Common myeloid progenitor, CD34-positive (primary cell): ENCODE measurements at regions of chr2 and their contacts with region 1.

Region 1: GRCh38 chr2:11719230-11719977 is 27.0 kb upstream of the LPIN1 start:
- DNase-seq: peak; percentile 61 to 87 (median 77)
- H3K4me3 ChIP-seq: peak overlapping the region in 6 of 7 experiments; percentile 46 to 76 (median 60)
- H3K27ac ChIP-seq: peak overlapping the region; percentile 8 to 49
- H3K4me1 ChIP-seq: peaks cover 3 to 31% (median 20%) of the 10 kb centered on the region in 4 experiments
- H3K27me3 ChIP-seq: no peaks in the 10 kb centered on the region

Region 2: DNA sequence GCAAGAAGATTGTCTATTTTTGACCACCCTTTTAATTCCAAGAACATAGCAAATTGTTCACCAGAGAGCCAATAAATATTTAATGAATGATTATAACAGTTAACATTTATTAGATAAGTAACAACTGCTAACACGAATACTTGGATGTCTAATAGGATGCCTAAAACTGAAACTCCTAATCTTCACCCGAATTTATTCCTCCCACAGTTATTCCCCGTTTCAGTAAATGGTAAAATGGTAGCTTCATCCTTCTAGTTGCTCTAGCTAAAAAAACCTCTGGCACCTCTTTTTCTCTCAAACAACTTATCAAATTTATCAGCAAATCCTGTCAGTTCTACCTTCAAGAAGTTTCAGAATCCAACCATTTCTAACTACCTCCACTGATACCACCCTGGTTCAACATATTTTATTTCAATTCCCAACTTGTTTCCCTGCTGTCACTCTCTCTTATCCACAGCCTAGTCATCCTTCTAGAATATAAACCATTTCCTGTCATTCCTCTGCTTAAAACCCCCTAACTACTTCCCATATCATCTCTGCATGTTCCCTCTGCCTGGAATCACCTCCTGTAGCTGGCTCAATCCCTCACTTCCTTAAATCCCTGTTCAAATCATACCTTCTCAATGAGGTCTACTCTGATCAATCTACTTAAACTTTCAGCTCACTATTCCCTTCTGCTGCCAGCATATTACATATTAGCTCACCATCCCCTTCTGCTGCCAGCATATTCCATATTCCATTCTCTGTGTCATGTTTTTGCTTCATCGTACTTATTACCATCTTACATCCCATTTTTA is 468.8 kb before region 1 on chr2:
- CTCF ChIA-PET with region 1: no interaction called
- POLR2A ChIA-PET with region 1: no interaction called
- DNase-seq: no peak
- H3K4me3 ChIP-seq: no peak overlapping the region
- H3K27ac ChIP-seq: no peak overlapping the region
- H3K4me1 ChIP-seq: no peaks in the 10 kb centered on the region
- H3K27me3 ChIP-seq: no peaks in the 10 kb centered on the region

Region 3: DNA sequence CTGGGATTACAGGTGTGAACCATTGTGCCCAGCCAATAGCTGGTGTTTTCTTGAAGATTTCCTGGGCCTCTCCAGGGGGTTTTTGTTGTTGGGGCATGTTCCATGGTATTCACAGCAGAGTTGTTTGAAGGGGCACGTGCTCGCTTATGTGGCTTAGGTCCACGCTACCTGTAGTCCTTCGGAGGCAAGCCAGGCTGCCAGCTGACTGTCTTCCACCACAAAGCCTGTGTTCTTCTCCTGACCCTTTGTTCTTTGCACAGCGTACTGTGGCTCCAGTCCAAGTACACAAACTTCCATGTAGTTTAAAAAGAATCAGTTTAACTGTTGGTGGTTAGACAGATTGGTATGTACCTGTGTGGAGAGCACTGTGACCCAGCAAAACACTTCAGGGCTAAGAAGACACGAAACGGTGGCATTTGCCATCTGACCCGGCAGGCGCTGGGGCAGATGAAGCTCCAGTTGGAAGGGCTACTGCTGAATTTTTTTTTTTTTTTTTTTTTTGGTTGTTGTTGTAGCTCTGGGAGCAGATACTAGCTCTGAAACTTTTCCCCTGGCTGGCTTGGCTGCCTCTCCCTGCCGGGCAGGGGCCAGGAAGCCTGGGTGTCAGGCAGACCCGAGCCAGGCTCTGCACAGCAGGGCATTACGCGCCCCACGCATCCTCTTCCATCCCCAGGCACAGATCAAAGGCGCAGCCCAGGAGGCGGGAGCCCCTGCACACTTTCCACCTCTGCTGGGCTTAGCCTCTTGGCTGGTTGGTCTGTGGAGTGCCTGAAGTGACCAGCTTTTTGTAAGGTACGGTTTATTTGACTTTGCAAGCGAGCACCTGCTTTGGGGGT is 179.9 kb before region 1 on chr2:
- CTCF ChIA-PET with region 1: no interaction called
- POLR2A ChIA-PET with region 1: no interaction called
- DNase-seq: no peak
- H3K4me3 ChIP-seq: no peak overlapping the region
- H3K27ac ChIP-seq: no peak overlapping the region
- H3K4me1 ChIP-seq: no peaks in the 10 kb centered on the region
- H3K27me3 ChIP-seq: peaks cover 0 to 72% (median 10%) of the 10 kb centered on the region in 5 experiments

Region 4: GRCh38 chr2:11688222-11689069 is 31.0 kb before region 1 on chr2:
- CTCF ChIA-PET with region 1: interaction called, 12 read pairs
- POLR2A ChIA-PET with region 1: no interaction called
- DNase-seq: peak; percentile 91 to 94 (median 94)
- H3K4me3 ChIP-seq: peak overlapping the region in 4 of 7 experiments; percentile 34 to 67 (median 48)
- H3K27ac ChIP-seq: no peak overlapping the region
- H3K4me1 ChIP-seq: peaks cover 4 to 23% (median 11%) of the 10 kb centered on the region in 4 experiments
- H3K27me3 ChIP-seq: peaks cover 0 to 11% (median 6%) of the 10 kb centered on the region in 5 experiments

Region 5: GRCh38 chr2:11697103-11697871 is 22.1 kb before region 1 on chr2:
- CTCF ChIA-PET with region 1: interaction called, 25 read pairs
- POLR2A ChIA-PET with region 1: interaction called, 5 read pairs
- DNase-seq: peak; percentile 87 to 98 (median 97)
- H3K4me3 ChIP-seq: peak overlapping the region in 4 of 7 experiments; percentile 28 to 51 (median 48)
- H3K27ac ChIP-seq: peak overlapping the region in 1 of 2 experiments; percentile 53
- H3K4me1 ChIP-seq: peaks cover 0 to 69% (median 53%) of the 10 kb centered on the region in 4 experiments
- H3K27me3 ChIP-seq: no peaks in the 10 kb centered on the region

Region 6: DNA sequence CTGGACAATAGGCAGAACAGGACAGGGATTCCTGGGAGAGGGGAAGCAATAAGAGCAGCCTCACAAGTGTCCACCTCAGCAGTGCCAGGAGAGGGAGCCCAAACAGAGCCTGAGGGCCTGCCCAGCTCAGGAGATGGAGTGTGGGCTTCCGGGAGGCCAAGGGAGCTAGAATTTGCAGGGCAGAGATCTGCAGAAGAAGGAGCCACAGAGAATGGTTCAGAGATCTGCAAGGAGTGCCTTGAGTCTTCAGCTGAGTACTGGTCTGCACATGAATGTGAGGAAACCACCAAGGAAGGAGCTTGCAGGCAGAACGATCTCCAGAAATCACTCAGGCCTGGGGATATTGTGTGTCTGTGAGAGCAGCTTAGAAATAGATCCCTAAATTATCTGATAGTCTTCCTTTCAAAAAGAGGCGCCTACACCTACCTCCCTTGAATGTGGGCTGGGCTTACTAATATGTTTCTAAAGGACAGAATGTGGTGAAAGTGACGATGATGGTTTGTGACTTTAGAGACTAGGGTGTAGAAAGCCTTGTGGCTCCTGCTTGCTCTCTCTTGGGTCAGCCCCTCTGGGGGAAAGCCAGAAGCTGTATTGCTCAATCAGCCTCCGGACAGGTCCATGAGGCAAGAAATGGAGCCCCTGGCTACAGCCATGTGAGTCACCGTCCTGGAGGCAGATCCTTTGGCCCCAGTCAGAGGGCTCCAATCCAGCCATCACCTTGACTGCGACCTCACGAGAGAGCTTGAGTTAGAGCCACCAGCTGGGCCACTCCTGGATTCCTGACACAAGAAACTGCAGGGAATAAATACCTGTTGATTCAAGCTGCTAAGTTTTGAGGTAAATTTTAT is 19.4 kb after region 1 on chr2:
- CTCF ChIA-PET with region 1: interaction called, 36 read pairs
- POLR2A ChIA-PET with region 1: interaction called, 5 read pairs
- DNase-seq: peak; percentile 52 to 64 (median 64)
- H3K4me3 ChIP-seq: no peak overlapping the region
- H3K27ac ChIP-seq: no peak overlapping the region
- H3K4me1 ChIP-seq: peaks cover 0 to 29% (median 13%) of the 10 kb centered on the region in 4 experiments
- H3K27me3 ChIP-seq: no peaks in the 10 kb centered on the region